Posterior cingulate gyrus (tissue), 11 donors: ENCODE measurements at regions of chr5 and their contacts with region 1.

Region 1: DNA sequence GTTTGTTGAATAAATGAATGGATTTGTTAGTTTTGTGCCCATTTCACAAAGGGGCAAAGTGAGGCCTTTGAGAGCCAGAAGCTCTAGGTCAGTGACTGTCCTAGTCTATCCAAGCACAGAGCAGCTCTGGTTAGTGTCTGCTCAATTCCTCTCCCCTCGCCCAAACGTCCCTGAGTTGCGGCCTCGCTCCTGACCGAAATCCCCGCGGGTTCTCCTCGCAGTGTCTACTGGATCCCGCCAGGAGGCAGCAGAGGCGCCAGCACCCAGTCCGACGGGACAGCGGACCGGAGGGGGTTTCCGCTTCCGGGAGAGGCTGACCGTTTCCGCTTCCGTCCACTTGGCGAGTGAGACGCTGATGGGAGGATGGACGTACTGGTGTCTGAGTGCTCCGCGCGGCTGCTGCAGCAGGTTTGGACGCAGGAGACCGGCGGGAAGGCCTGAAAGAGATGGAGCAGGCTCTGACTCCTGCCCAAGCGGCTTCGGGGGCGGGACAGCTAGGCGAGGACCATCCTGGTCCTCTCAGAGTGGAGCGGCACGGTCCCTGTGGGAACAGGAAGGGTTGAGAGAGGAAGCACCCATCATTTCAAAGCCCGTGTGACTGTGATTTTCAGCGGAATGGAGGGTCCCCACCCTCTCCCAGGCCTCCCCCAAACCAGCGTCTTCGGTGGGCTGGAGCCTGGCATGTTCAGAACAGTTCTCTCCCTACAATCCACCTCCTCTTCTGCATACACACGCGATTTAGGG is at the start of gene RARS1:
- DNase-seq: peak; percentile 94 to 100 (median 98)

Region 2: DNA sequence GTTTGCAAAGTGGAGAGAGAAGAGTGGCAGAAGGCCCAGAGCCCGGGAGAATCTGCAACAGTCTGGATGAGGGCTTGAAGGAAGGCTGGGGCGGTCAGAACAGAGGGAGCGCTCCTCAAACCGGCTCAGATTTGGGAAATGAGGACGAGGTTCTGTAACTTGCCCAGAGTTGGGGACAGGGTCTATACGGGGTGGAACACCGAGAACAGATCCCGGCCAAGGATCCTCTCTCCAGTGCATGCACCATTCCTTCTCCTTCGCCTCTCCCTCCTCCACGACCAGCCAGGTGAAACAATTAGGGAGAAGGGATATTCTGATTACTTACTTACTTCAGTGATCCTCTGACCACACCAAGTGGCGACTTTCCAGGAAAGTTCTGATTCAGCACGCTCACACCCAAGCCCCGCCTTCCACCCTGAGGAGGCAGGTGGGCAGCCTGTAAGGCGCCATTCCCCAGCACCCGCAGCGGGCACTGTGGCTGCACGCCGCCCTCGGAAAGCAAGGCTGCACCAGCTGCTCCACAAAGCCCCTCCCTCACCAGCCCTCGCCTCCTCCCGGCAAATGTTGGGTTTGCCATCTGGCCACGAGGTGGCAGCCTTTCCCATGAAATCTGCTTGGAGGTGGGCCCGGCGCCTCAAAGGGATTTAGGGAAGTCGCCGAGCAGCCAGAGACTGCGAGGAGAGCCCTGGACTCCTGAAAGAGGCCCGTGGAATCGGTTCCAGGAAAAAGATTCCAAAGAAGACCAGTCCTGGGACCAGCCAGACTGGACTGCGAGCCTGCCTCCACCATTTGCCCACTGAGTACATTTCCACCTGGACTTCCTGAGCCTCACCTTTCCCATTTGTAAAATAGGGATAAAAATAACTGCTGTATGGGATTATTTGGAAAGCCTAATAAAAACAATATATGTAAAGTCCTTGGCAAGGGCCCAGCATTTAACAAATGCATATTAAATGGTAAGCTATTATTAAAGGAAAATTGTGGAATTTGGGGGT is 217.1 kb before region 1 on chr5:
- intact Hi-C with region 1: loop called (anchors 5 kb)
- DNase-seq: peak; percentile 81 to 98 (median 90)

Region 3: GRCh38 chr5:168579488-168580226 is 93.3 kb after region 1 on chr5:
- intact Hi-C with region 1: loop called (anchors 2 kb)
- DNase-seq: peak; percentile 98 to 100 (median 100)